GM10248 (cell line): ENCODE measurements at regions of chr2 and their contacts with region 1.

Region 1: GRCh38 chr2:102240640-102241370 is 54.0 kb downstream of the IL1RL2 start:
- DNase-seq: peak; percentile 87
- CTCF ChIP-seq: peak; percentile 97

Region 2: GRCh38 chr2:102005989-102006885 is 234.6 kb before region 1 on chr2:
- CTCF ChIA-PET with region 1: interaction called, 82 read pairs
- POLR2A ChIA-PET with region 1: no interaction called
- DNase-seq: peak; percentile 55
- CTCF ChIP-seq: peak; percentile 51

Region 3: GRCh38 chr2:102033031-102033749 is 207.6 kb before region 1 on chr2:
- CTCF ChIA-PET with region 1: interaction called, 13 read pairs
- POLR2A ChIA-PET with region 1: no interaction called
- DNase-seq: peak; percentile 22
- CTCF ChIP-seq: no peak

Region 4: DNA sequence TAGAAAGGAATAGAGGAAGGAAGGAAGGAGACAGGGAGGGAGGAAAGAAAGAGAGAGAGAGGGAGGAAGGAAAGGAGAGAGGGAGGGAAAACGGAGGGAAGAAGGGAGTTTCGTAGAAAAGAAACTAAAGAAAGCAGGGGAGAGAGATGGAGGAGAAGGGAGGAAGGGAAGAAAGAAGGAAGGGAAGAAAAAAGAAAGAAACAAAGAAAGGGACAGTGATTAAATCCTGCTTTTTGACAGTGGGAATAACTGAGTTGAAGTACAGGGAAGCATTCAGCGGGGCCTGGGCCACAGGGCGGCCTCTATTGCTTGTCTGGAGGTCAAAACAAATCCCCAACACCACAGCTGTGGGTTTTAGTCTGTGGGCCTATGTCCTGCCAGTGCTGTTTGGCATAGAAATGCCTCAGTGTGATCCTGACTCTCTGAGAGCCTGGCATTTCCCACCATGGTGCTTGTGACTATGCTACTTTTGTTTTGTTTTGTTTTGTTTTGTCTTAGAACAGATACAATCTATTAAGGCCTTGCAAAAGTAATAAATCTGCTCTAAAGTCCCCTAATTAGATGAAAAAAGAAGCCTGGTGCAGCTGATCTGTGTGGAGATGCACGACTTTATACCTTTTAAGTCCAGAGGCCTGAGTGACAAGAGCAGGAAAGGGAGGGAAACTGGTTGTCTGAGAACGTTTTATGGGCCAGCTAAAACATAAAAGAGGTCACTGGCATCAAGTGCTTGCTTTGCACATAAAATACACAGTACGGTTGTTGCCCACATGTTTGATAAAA is 14.0 kb before region 1 on chr2:
- CTCF ChIA-PET with region 1: interaction called, 25 read pairs
- POLR2A ChIA-PET with region 1: no interaction called
- DNase-seq: no peak
- CTCF ChIP-seq: no peak

Region 5: GRCh38 chr2:102355526-102356380 is 114.9 kb after region 1 on chr2 and contains the start of gene IL18R1:
- CTCF ChIA-PET with region 1: interaction called, 14 read pairs
- POLR2A ChIA-PET with region 1: no interaction called
- DNase-seq: peak; percentile 81
- CTCF ChIP-seq: peak; percentile 86

Region 6: GRCh38 chr2:102449370-102449974 is 208.7 kb after region 1 on chr2:
- CTCF ChIA-PET with region 1: interaction called, 49 read pairs
- POLR2A ChIA-PET with region 1: no interaction called
- DNase-seq: peak; percentile 46
- CTCF ChIP-seq: peak; percentile 79

Region 7: DNA sequence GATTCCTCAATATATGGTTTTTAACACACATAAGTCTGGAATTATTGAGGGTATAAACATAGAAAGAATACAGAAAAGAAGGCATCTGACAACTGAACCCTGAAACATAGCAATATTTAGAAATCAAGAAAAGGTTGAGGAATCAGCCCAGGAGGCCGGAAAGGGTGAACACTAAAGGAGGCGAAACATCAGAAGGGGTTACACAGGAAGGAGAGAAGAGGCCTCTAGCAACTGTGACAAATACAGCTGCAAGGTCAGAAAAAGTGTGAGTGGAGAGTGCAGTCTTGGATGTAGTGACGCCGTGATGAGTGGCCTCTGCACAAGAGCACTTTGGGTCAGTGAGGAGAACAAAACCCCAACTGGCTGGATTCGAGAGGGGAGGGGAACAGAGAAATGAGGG is 449.2 kb after region 1 on chr2:
- CTCF ChIA-PET with region 1: no interaction called
- POLR2A ChIA-PET with region 1: no interaction called
- DNase-seq: no peak
- CTCF ChIP-seq: no peak

Region 8: DNA sequence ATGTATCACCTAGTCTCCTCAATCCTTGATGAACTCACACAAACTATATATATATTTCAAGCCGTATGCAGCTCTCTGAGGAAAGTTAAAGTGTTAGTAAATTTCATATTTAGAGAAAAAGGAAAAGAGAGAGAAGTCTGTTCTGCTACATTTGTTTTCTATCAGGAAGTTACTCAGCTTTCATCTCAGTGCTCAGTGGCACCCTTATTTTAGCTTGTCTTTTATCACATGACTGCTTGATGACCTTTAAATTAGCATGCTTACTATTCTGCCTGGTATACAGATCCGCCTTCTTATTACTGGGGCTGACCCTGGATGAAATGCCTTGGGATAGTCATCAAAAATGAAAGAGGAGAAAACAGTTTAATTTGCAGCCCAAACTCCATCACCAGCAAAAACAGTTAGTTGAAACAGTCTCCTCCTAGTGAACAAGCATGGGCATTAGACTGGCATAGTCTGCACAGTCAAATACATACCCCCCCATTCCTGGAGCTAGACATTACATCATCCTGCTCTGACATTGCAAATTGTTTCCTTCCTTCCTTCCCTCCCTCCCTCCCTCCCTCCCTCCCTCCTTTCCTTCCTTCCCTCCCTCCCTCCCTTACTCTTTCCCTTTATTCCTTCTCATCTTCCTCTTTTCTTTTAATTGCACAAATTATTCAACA is 736.8 kb after region 1 on chr2:
- CTCF ChIA-PET with region 1: no interaction called
- POLR2A ChIA-PET with region 1: no interaction called
- DNase-seq: no peak
- CTCF ChIP-seq: no peak